HepG2 (cell line): ENCODE measurements at regions of chrX and their contacts with region 1.

Region 1: DNA sequence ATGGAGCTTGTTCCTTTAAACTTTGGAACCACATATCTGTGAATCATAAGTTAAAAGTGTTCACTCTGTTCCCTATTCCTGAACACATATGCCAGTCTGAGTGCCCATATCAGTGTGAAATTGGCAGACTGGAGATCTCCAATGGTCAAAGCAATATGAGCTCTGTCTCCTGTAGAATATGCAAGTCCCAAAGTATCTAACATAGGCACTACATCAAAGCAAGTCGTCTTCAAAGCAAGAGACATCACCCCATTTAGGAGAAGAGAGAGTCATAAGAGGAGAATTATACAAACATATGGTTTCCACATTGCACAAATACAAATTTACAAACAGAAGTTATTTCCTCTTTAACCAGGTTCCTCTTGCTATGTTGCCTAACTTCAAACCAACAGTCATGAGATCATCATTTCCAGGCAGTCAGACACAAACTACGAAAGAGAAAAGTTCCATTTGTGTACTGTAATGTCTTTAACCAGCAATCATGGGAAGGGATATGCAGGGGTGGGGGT is 9.9 kb upstream of the GK start:
- DNase-seq: peak; percentile 87
- ATAC-seq: peak; percentile 84
- H3K4me3 ChIP-seq: peak overlapping the region in 2 of 3 experiments; percentile 7 to 37; a peak in 3 of 6 replicates
- H3K27ac ChIP-seq: peak overlapping the region; percentile 97
- H3K4me1 ChIP-seq: peaks cover 77% of the 10 kb centered on the region
- H3K27me3 ChIP-seq: no peaks in the 10 kb centered on the region
- CTCF ChIP-seq: no peak
- EP300 ChIP-seq: peak in 1 of 2 experiments; percentile 96; a peak in 2 of 4 replicates
- POLR2A ChIP-seq: peak in 1 of 2 experiments; percentile 34; a peak in 1 of 4 replicates
- RAD21 ChIP-seq: no peak

Region 2: GRCh38 chrX:30414144-30414543 is 229.2 kb before region 1 on chrX:
- CTCF ChIA-PET with region 1: no interaction called
- POLR2A ChIA-PET with region 1: no interaction called
- in situ Hi-C with region 1: no loop called
- intact Hi-C with region 1: no loop called
- DNase-seq: no peak
- ATAC-seq: peak; percentile 47; the same call in 2 of the 3 replicates
- H3K4me3 ChIP-seq: no peak overlapping the region
- H3K27ac ChIP-seq: no peak overlapping the region
- H3K4me1 ChIP-seq: no peaks in the 10 kb centered on the region
- H3K27me3 ChIP-seq: peaks cover 0 to 1% of the 10 kb centered on the region in 2 experiments; a peak in 1 of 5 replicates
- CTCF ChIP-seq: no peak
- EP300 ChIP-seq: no peak
- POLR2A ChIP-seq: no peak
- RAD21 ChIP-seq: no peak

Region 3: DNA sequence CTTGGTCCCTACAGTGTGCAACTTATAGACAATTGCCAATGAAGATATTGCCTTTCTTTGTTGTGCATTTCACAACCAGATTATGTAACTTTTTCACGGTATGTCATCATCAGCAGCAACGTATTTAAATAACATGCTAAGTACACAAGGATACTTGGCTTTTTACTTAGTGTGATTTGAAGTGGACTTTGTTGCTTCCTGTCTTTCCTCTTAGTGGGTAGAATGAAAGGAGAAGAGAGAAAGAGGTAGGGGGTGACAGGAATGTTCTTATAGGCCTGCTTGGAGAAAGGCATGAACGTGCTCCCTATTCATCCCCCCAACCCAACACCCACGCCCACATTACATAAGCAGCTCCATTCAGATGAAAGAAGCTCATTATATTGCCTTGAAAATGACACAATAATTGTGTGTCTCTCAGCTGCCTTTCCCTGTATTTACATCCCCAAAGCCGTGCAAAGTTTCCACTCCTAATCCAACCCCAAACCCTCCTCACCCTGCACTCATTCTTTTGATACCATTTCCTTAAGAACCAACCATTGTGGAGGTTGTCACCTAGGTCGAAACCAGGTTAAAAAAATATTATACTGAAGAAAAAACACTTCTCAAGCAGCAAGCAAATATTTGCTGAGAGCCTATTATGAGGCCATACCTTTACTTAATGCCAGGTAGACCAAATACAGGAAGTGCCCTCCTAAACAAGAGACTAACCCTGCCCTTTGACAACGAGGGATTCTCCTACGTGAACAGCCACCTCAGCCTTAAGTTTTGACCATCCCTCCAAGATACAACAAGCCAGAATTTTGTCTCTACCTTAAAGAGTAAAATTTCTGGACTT is 15.3 kb before region 1 on chrX:
- CTCF ChIA-PET with region 1: no interaction called
- POLR2A ChIA-PET with region 1: interaction called, 18 read pairs
- in situ Hi-C with region 1: no loop called
- intact Hi-C with region 1: no loop called
- DNase-seq: peak; percentile 88
- ATAC-seq: peak; percentile 81
- H3K4me3 ChIP-seq: no peak overlapping the region; a peak in 1 of 6 replicates
- H3K27ac ChIP-seq: peak overlapping the region; percentile 94
- H3K4me1 ChIP-seq: peaks cover 43% of the 10 kb centered on the region
- H3K27me3 ChIP-seq: no peaks in the 10 kb centered on the region
- CTCF ChIP-seq: no peak
- EP300 ChIP-seq: peak; percentile 77 to 96
- POLR2A ChIP-seq: no peak; a peak in 1 of 4 replicates
- RAD21 ChIP-seq: no peak

Region 4: DNA sequence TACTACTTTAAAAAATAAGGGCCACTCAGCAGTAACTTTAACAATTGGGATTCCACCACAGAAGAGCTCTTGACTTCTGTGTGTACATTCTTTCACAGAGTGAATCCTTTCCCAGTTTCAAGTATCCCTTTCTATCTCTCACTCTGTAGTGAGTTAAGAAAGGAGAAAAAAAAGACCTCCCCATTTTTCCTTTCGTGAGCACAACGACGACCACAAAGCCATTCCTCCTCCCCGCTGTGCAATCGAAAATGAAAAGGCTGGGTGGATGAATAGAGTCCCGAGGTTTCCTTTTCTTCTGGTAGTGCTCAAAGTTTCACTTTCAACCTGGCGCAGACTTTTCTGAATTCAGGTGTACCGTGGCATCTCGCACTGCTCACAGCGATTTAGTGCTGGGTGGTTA is 187.7 kb after region 1 on chrX:
- CTCF ChIA-PET with region 1: no interaction called
- POLR2A ChIA-PET with region 1: no interaction called
- in situ Hi-C with region 1: no loop called
- intact Hi-C with region 1: no loop called
- DNase-seq: no peak
- ATAC-seq: no peak
- H3K4me3 ChIP-seq: no peak overlapping the region
- H3K27ac ChIP-seq: no peak overlapping the region
- H3K4me1 ChIP-seq: peaks cover 35% of the 10 kb centered on the region
- H3K27me3 ChIP-seq: no peaks in the 10 kb centered on the region
- CTCF ChIP-seq: no peak
- EP300 ChIP-seq: no peak
- POLR2A ChIP-seq: no peak
- RAD21 ChIP-seq: no peak

Region 5: DNA sequence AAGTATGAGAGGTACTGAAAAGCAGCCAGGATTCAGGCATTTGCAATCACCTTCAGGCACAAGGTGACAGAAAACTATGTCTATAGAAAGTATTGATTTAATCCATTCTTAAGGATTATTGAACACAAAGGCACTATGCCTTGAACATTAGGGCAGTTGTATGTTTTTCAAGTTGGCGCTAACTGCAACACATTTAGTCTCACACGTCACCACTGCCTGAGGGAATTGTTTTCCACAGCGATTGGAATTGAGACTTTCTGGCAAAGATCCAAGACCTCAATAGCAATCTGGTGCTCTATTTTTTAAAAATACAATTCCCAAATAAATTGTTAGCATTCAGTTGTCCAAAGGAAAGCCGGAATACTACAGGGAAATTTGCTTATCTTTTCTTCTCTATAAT is 481.2 kb after region 1 on chrX:
- CTCF ChIA-PET with region 1: no interaction called
- POLR2A ChIA-PET with region 1: no interaction called
- in situ Hi-C with region 1: no loop called
- intact Hi-C with region 1: no loop called
- DNase-seq: no peak
- ATAC-seq: no peak
- H3K4me3 ChIP-seq: no peak overlapping the region
- H3K27ac ChIP-seq: no peak overlapping the region
- H3K4me1 ChIP-seq: no peaks in the 10 kb centered on the region
- H3K27me3 ChIP-seq: no peaks in the 10 kb centered on the region
- CTCF ChIP-seq: no peak
- EP300 ChIP-seq: no peak
- POLR2A ChIP-seq: no peak
- RAD21 ChIP-seq: no peak

Region 6: DNA sequence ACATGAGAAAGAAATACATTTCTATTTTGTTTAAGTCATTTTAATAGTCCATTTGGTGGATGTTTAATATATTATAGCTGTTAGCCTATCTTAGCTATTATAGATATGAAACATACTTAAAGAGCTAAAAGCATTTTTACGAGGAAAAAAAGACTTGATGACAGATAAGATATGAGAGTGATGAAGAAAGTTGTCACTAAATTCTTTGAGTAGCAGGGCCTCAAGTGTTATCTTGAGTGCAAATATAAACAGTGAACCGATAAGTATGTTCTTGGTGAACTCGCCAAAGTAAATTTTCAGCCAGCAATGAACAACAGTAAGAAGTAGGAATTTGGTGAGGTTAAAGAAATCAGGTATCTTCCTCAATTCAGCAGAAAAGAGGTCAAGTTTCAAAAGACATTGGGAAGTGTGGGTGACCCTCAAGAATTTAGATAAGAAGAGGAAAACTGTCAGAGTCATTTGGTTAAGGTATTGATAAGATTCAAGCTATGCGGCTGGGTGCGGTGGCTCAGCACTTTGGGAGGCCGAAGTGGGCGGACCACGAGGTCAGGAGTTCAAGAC is 900.3 kb after region 1 on chrX:
- CTCF ChIA-PET with region 1: no interaction called
- POLR2A ChIA-PET with region 1: no interaction called
- in situ Hi-C with region 1: no loop called
- intact Hi-C with region 1: no loop called
- DNase-seq: no peak
- ATAC-seq: no peak
- H3K4me3 ChIP-seq: no peak overlapping the region
- H3K27ac ChIP-seq: no peak overlapping the region
- H3K4me1 ChIP-seq: no peaks in the 10 kb centered on the region
- H3K27me3 ChIP-seq: no peaks in the 10 kb centered on the region
- CTCF ChIP-seq: no peak
- EP300 ChIP-seq: no peak
- POLR2A ChIP-seq: no peak
- RAD21 ChIP-seq: no peak